Left ventricle myocardium superior (tissue), 1 donor: ENCODE measurements at regions of chr2 and their contacts with region 1.

Region 1: GRCh38 chr2:161586517-161587167 is 37.6 kb upstream of the SLC4A10 start:
- DNase-seq: no peak
- ATAC-seq: no peak

Region 2: GRCh38 chr2:162123806-162124758 is 537.4 kb after region 1 on chr2:
- intact Hi-C with region 1: loop called (anchors 5 kb)
- DNase-seq: no peak
- ATAC-seq: peak; percentile 58

Region 3: DNA sequence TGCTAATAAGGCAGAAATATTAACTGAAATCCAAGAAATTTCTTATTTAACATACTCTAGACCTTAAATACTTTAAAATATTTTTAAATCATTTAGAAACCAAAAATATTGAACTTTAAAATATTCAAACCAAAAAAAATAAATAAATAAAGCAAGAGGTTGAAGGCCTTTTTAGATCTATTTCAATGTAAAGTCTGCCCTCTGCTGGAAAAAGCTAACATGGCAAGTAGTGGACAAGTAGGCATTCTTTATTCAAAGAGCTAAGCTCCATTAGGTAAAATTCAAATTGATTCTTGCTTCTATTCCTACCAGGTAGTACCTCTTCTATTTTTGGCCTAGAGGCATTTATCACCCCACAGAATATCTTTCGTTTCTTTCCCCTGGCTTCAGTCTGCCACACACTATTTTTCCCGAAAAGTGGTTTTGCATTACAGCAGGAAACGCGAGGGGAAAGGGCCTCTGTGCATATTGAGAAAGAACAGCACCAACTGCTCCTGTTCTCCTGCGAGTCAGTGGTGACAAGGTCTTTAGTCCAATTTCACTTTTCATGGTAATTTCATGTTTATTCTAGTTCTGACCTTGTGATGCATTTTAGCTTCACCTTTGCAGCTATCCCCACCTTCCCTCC is 711.4 kb after region 1 on chr2:
- intact Hi-C with region 1: loop called (anchors 10 kb)
- DNase-seq: no peak
- ATAC-seq: peak; percentile 25